ENCODE measurements at regions of chr20 and their contacts with region 1.

Region 1: GRCh38 chr20:53594068-53595017 is 704 bp upstream of the ZNF217 start:
- DNase-seq: peak; percentile 95
- ATAC-seq: peak; percentile 70
- H3K4me3 ChIP-seq: peak overlapping the region; percentile 52 to 91 (median 85)
- H3K4me3 Mint-ChIP-seq: peak overlapping the region; percentile 92
- H3K27ac ChIP-seq: peak overlapping the region; percentile 92 to 96
- H3K27ac Mint-ChIP-seq: peak overlapping the region; percentile 96
- H3K4me1 ChIP-seq: peaks cover 26 to 27% of the 10 kb centered on the region in 2 donors
- H3K4me1 Mint-ChIP-seq: peaks cover 52% of the 10 kb centered on the region
- H3K27me3 ChIP-seq: no peaks in the 10 kb centered on the region
- H3K27me3 Mint-ChIP-seq: no peaks in the 10 kb centered on the region
- CTCF ChIP-seq: peak; percentile 14

Region 2: GRCh38 chr20:53611449-53611894 is 17.1 kb after region 1 on chr20:
- CTCF ChIA-PET with region 1: interaction called, 6 read pairs
- POLR2A ChIA-PET with region 1: interaction called, 10 read pairs
- intact Hi-C with region 1: loop called (anchors 2 kb)
- DNase-seq: no peak
- ATAC-seq: no peak
- H3K4me3 ChIP-seq: no peak overlapping the region
- H3K4me3 Mint-ChIP-seq: peak overlapping the region; percentile 27
- H3K27ac ChIP-seq: no peak overlapping the region
- H3K27ac Mint-ChIP-seq: peak overlapping the region; percentile 62
- H3K4me1 ChIP-seq: peaks cover 28% of the 10 kb centered on the region in 2 donors
- H3K4me1 Mint-ChIP-seq: peaks cover 34% of the 10 kb centered on the region
- H3K27me3 ChIP-seq: no peaks in the 10 kb centered on the region
- H3K27me3 Mint-ChIP-seq: no peaks in the 10 kb centered on the region
- CTCF ChIP-seq: no peak

Region 3: GRCh38 chr20:53652090-53652858 is 57.9 kb after region 1 on chr20:
- CTCF ChIA-PET with region 1: no interaction called
- POLR2A ChIA-PET with region 1: interaction called, 7 read pairs
- intact Hi-C with region 1: loop called (anchors 2 kb)
- DNase-seq: peak; percentile 65
- ATAC-seq: peak; percentile 50
- H3K4me3 ChIP-seq: peak overlapping the region in 4 of 5 experiments; percentile 13 to 48 (median 22)
- H3K4me3 Mint-ChIP-seq: peak overlapping the region; percentile 87
- H3K27ac ChIP-seq: peak overlapping the region; percentile 84 to 87
- H3K27ac Mint-ChIP-seq: peak overlapping the region; percentile 97
- H3K4me1 ChIP-seq: peaks cover 38 to 50% of the 10 kb centered on the region in 2 donors
- H3K4me1 Mint-ChIP-seq: peaks cover 43% of the 10 kb centered on the region
- H3K27me3 ChIP-seq: no peaks in the 10 kb centered on the region
- H3K27me3 Mint-ChIP-seq: no peaks in the 10 kb centered on the region
- CTCF ChIP-seq: no peak

Region 4: DNA sequence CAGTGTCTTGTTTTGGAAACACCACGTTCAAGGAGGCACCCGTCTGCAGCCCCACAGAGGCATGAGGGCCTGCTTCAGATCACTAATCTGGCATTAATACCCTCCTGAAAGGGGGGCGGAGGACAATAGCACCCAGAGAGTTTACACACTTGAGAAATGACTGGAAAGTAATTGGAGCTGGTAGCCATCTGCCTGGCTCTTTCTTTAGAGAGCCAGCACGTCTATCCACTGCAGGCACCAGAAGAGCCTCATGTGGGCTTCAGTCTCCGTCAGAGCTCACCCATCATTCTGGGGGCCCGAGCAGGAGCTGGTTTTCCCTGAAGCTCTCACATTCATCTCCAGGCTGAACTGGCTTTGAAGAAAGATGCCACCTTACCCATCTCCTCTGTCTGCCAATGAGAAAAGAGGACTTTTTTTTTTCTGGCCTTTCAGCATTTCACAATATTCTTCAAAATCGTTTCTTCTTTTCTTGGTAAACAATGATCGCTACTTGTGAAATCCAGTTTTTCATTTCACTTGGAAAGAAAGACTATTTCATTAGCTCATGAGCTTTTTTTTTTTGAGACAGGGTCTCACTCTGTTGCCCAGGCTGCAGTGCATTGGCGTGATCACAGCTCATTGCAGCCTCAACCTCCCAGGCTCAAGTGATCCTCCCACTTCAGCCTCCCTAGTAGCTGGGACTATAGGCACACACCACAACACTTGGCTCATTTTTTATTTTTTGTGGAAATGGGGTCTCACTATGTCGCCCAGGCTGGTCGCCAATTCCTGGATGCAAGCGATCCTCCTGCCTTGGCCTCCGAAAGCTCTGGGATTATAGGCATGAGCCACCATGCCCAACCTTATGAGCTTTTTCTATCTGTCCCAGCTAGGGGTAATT is 124.0 kb after region 1 on chr20:
- CTCF ChIA-PET with region 1: no interaction called
- POLR2A ChIA-PET with region 1: no interaction called
- intact Hi-C with region 1: no loop called
- DNase-seq: no peak
- ATAC-seq: no peak
- H3K4me3 ChIP-seq: no peak overlapping the region
- H3K4me3 Mint-ChIP-seq: no peak overlapping the region
- H3K27ac ChIP-seq: no peak overlapping the region
- H3K27ac Mint-ChIP-seq: no peak overlapping the region
- H3K4me1 ChIP-seq: peaks cover 22 to 38% of the 10 kb centered on the region in 2 donors
- H3K4me1 Mint-ChIP-seq: peaks cover 29% of the 10 kb centered on the region
- H3K27me3 ChIP-seq: no peaks in the 10 kb centered on the region
- H3K27me3 Mint-ChIP-seq: no peaks in the 10 kb centered on the region
- CTCF ChIP-seq: no peak

Region 5: DNA sequence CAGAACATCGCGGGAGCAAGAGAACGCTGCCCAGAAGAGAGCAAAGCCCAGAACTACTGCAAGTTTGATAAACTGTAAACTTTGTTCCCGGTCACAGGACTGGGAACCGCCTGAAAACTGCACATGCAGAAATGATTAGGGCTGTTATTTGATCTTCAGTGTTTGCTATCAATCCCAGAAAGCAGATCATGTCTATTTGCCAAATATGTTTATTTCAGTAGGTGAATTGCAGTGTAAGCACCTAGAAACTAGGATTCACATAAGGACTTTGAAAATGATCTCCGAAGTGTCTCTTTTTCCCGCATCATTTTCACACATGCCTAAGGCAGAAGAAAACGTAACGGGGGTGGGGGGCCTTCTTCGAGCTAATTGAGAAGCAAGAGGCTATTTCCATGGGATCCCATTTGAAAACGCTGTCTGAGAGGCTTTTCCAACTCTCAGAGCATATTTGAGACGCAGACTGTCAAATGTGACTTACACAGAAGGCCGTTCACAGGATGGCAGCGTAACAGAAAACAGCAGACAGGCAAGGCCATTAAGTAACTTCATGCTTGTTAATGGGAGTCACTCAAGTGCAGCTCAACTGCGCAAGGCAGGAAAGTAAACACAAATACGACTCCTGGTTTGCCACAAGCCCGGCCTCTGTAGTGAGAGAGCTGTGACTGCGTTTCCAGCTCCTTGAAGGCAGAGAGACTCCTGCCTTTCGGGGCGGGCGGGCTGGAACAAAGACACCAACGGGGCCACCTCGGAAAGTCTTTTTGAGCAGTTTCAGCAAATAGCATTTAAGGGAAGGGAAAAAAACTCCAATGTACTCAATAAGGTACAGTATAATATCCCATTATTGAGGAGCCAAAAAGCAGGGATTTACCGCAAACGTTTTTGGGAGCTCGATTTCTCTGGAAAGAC is 143.9 kb after region 1 on chr20:
- CTCF ChIA-PET with region 1: no interaction called
- POLR2A ChIA-PET with region 1: interaction called, 12 read pairs
- intact Hi-C with region 1: no loop called
- DNase-seq: peak; percentile 41
- ATAC-seq: no peak
- H3K4me3 ChIP-seq: no peak overlapping the region
- H3K4me3 Mint-ChIP-seq: peak overlapping the region; percentile 10
- H3K27ac ChIP-seq: peak overlapping the region; percentile 77 to 79
- H3K27ac Mint-ChIP-seq: peak overlapping the region; percentile 83
- H3K4me1 ChIP-seq: peaks cover 64 to 65% of the 10 kb centered on the region in 2 donors
- H3K4me1 Mint-ChIP-seq: peaks cover 71% of the 10 kb centered on the region
- H3K27me3 ChIP-seq: no peaks in the 10 kb centered on the region
- H3K27me3 Mint-ChIP-seq: no peaks in the 10 kb centered on the region
- CTCF ChIP-seq: no peak

Region 6: GRCh38 chr20:53818457-53819177 is 224.3 kb after region 1 on chr20:
- CTCF ChIA-PET with region 1: no interaction called
- POLR2A ChIA-PET with region 1: no interaction called
- intact Hi-C with region 1: no loop called
- DNase-seq: no peak
- ATAC-seq: no peak
- H3K4me3 ChIP-seq: no peak overlapping the region
- H3K4me3 Mint-ChIP-seq: no peak overlapping the region
- H3K27ac ChIP-seq: no peak overlapping the region
- H3K27ac Mint-ChIP-seq: no peak overlapping the region
- H3K4me1 ChIP-seq: no peaks in the 10 kb centered on the region
- H3K4me1 Mint-ChIP-seq: peaks cover 4% of the 10 kb centered on the region
- H3K27me3 ChIP-seq: no peaks in the 10 kb centered on the region
- H3K27me3 Mint-ChIP-seq: no peaks in the 10 kb centered on the region
- CTCF ChIP-seq: no peak

Region 7: DNA sequence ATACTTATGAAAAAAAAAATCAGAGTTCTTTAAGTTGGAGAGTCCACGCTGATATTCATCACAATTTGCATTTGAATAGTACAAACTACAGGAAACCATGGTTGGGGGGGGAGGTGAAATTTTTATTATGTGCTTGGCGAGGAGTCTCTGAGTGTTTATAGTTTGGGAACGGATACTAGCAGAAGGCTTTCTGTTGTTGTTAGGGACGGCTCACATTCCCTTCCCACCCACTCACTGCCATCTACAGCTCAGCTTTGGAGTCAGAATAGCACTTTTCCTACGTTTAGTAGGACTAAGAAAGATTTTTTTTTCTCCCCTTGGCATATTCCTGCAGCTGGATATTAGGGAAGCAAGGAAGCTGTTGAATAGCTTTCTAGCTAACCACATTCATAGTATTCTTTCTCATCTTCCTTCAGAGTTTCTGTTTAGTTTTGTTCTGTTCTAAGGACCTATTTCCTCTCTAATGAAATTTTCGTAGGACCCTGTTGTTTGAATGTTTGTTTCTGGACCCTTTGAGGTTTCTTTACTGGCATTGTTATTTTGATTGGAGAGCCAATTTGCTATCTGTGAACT is 234.4 kb after region 1 on chr20:
- CTCF ChIA-PET with region 1: no interaction called
- POLR2A ChIA-PET with region 1: interaction called, 4 read pairs
- intact Hi-C with region 1: loop called (anchors 5 kb)
- DNase-seq: peak; percentile 27
- ATAC-seq: no peak
- H3K4me3 ChIP-seq: peak overlapping the region; percentile 15 to 50 (median 24)
- H3K4me3 Mint-ChIP-seq: peak overlapping the region; percentile 88
- H3K27ac ChIP-seq: peak overlapping the region; percentile 83 to 93
- H3K27ac Mint-ChIP-seq: peak overlapping the region; percentile 98
- H3K4me1 ChIP-seq: peaks cover 53 to 61% of the 10 kb centered on the region in 2 donors
- H3K4me1 Mint-ChIP-seq: peaks cover 70% of the 10 kb centered on the region
- H3K27me3 ChIP-seq: no peaks in the 10 kb centered on the region
- H3K27me3 Mint-ChIP-seq: no peaks in the 10 kb centered on the region
- CTCF ChIP-seq: no peak

Region 8: DNA sequence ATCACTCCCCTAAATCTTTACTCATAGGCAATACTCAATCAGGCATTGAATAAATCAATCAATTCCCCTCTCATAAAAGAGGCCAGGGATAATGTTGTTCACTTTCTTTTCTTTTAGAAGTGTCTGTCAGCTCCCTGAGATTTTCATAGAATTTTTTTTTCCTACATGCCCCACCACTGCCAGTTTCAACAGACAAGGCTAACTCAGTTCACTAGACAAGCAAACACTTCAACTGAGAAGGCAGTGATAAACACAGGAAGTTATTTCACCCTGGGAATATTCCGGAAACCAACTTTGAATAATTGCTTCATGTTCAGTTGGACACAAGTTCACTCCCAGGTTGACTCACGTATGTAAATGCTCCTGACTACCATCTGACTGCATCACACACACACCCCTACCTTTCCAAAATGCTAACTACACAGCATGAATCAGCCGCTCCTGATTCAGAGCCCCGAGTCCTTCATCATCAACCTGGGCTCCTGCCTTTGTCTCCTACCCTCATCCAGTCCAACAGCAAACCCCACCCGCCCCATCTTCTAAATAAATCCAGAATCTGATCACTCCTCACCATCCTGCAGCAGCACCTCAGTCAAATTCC is 332.2 kb after region 1 on chr20:
- CTCF ChIA-PET with region 1: interaction called, 4 read pairs
- POLR2A ChIA-PET with region 1: interaction called, 7 read pairs
- intact Hi-C with region 1: loop called (anchors 1 kb)
- DNase-seq: peak; percentile 87
- ATAC-seq: peak; percentile 82
- H3K4me3 ChIP-seq: peak overlapping the region in 3 of 5 experiments; percentile 3 to 13 (median 10)
- H3K4me3 Mint-ChIP-seq: peak overlapping the region; percentile 88
- H3K27ac ChIP-seq: peak overlapping the region; percentile 75 to 83
- H3K27ac Mint-ChIP-seq: peak overlapping the region; percentile 98
- H3K4me1 ChIP-seq: peaks cover 74 to 79% of the 10 kb centered on the region in 2 donors
- H3K4me1 Mint-ChIP-seq: peaks cover 81% of the 10 kb centered on the region
- H3K27me3 ChIP-seq: no peaks in the 10 kb centered on the region
- H3K27me3 Mint-ChIP-seq: no peaks in the 10 kb centered on the region
- CTCF ChIP-seq: no peak